ENCODE measurements at regions of chr10 and their contacts with region 1.

Region 1: DNA sequence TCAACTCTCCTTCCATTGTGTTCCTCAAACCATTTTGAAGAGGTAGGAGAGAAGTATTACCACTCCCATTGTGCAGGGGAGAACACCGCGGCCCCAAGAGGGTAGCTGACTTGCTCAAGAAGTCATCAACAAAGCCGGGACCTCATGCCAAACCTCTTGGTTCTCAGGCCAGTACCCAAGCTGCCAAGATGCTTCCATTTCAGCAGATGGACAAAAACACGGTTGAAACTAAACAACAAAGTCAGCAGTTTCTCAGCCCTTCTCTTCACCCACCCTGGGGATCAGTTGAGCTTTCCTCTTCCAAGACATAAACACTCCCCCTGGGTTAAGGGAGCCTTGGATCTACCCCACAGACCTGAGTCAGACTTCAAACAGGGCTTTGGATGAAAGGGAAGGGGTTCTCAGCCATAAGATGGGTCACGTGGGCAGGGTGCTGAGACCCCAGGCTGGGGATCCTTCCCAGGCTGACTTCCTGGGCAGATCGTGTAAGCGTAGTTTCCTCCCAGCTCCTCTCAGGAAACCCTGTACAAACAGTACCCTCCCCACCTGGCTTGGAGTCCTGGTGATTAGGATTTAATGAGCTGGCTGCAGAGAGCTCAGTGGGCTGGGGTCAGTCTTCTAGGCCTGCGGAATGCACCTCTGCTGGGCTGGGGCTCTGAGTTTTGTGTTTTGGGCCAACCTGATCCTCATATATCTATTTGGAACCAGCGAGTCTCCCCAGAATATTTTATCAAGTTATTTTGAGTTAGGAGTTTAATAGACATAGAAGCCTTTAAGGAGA is 27.3 kb downstream of the EMX2 start:
- DNase-seq: no peak
- ATAC-seq: no peak
- H3K4me3 ChIP-seq: no peak overlapping the region
- H3K27ac ChIP-seq: no peak overlapping the region
- H3K4me1 ChIP-seq: no peaks in the 10 kb centered on the region
- H3K27me3 ChIP-seq: peaks cover 0 to 73% of the 10 kb centered on the region in 2 donors
- CTCF ChIP-seq: no peak

Region 2: DNA sequence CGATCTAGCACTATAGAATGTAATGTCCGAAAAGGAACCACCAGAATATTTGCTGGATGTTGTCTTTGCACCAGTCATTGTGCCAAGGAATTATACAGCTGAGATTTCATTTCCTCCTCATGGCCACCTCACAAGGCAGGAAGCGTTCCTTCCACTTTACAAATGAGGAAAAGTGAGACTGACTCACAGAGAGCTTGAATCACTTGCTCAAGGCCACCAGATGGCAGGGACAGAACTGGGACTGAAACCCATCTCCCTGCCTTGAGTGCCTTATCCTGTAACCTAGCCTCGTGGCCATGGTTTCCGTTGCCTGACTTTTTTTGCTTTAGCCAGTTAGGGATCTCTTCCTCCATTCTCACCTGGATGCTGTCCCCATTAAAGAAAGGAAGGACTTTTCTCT is 149.9 kb before region 1 on chr10:
- intact Hi-C with region 1: no loop called
- DNase-seq: no peak
- ATAC-seq: no peak
- H3K4me3 ChIP-seq: no peak overlapping the region
- H3K27ac ChIP-seq: no peak overlapping the region
- H3K4me1 ChIP-seq: no peaks in the 10 kb centered on the region
- H3K27me3 ChIP-seq: no peaks in the 10 kb centered on the region
- CTCF ChIP-seq: no peak

Region 3: DNA sequence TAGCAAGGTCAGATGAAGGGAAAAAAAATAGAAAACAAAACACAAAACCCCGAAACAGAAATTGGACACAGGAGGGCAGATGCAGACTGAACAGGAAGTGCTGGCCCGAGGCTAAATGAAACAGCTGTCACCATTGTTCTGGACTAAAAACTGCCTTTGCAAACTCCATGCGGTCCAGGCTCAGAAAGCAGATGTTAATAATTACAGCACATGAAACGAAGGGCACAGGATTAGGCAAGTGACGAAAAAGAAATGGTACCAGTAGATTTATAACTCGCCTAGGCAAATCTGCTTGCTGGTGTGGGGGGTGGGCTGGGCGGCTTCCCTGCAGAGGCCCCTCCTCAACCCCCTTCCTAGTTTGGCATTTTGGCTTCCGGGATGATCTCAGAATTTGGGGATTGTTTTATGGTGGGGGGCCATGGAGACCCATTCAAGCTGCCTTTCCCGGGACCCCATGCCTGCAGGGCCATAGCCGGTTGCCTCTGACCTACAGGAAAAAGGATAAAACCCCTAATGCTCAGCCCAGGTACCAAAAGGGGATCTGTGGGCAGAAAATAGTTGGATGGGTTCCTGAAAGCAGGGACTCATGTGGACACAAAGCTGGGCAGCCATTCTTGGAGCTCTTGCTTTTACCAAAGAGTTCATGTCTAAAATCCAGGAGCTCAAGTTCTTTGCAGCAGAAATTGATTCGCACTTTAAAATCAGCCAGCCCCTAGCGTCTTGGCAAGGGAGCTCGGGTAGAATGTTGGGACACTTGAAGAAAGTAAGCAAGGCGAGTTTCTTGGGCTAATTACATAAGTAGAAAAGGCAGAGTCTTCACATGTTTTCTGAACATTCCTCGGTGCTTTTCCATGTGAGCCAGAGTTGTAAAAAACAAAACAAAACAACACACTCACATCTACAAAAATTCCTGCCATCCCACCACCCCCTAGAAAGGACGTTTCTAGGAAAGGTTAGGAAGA is 66.3 kb before region 1 on chr10:
- intact Hi-C with region 1: no loop called
- DNase-seq: peak in 2 of 4 donors; percentile 19 to 36
- ATAC-seq: no peak
- H3K4me3 ChIP-seq: no peak overlapping the region
- H3K27ac ChIP-seq: no peak overlapping the region
- H3K4me1 ChIP-seq: no peaks in the 10 kb centered on the region
- H3K27me3 ChIP-seq: peaks cover 0 to 77% of the 10 kb centered on the region in 2 donors
- CTCF ChIP-seq: no peak

Region 4: DNA sequence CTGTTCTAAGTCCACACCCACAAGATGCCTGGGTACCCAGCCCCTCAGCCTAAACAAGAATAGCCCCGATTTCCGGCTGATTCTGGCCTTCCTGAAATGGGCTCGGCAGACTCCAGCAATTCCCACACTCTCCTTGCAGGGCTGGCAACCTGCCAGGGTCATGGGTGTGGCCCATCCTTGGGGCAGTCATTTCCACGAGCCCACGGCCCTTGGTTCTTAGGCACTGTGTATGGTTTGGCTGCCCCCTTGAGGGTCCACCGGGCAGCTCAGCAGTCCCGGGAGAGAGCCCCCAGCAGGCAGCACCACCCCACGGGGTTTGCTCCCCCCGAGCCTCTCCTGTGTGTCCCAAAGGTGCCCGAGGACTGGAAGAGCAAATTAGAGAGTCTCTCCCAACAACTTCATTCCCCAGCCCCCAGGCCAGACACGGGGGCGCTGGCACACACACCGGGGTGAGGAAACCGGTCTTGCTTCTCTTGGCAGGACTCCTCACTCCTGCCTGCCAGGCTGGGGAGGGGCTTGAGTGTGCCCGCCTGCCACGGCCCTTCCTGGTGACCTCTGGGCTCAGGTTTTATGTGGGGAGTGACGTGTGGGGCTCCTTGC is 115.0 kb after region 1 on chr10:
- intact Hi-C with region 1: loop called in 1 of 2 experiments (anchors 10 kb)
- DNase-seq: peak in 3 of 4 donors; percentile 3 to 64 (median 36)
- ATAC-seq: peak; percentile 65
- H3K4me3 ChIP-seq: no peak overlapping the region
- H3K27ac ChIP-seq: no peak overlapping the region
- H3K4me1 ChIP-seq: no peaks in the 10 kb centered on the region
- H3K27me3 ChIP-seq: peaks cover 0 to 26% of the 10 kb centered on the region in 2 donors
- CTCF ChIP-seq: no peak